CD14-positive monocyte (primary cell): ENCODE measurements at regions of chr10 and their contacts with region 1.

Region 1: DNA sequence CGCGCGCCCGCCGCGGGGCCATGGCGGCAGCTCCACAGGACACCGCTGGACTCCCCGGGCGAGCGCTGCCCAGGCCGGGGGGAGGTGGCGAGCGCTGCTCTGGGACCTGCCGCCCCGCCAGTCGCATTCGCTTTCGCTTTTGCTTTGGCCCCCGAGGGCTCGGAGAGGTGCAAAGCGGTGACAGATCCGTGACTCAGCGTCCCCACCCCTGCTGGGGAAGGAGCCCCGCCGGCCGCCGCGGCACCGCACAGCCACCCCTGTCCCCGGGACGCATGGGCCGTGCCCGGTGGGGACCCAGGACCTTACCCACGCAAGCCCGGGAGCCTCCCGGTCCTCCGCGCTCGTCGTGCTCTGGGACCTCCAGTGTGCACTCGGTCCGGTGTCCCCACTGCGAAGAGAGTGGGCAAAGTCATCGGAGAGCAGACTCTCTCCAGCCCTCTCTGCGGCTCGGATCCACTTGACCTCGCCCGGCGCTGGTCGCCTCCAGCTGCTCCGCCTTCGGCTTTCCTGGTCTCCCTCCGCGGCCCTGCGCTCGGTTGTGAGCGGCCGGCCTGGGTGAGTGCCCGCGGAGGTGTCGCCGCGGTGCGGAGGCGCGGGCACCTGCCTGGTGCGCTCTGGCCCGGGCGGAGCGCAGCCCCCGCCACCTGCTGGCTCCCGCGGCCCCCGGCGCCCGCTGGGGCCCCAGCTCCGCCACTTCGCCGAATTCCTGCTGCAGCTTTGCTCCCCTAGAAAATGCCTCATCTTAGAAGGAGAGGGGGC is at the start of gene IL15RA:
- DNase-seq: peak; percentile 78 to 90 (median 80)
- H3K4me3 ChIP-seq: peak within 1 kb of the TSS; percentile 71 to 97 (median 96)
- H3K4me3 Mint-ChIP-seq: peak within 1 kb of the TSS; percentile 98 to 99
- H3K27ac ChIP-seq: peak within 1 kb of the TSS; percentile 68 to 86
- H3K27ac Mint-ChIP-seq: peak within 1 kb of the TSS; percentile 89 to 95 (median 93)
- H3K4me1 ChIP-seq: peaks cover 13 to 25% of the 10 kb centered on the region in 2 donors
- H3K4me1 Mint-ChIP-seq: peaks cover 25% of the 10 kb centered on the region
- H3K27me3 ChIP-seq: peaks cover 0 to 3% of the 10 kb centered on the region in 2 donors
- H3K27me3 Mint-ChIP-seq: peaks cover 5 to 8% (median 7%) of the 10 kb centered on the region in 3 donors
- CTCF ChIP-seq: no peak
- polyA plus RNA-seq, gene IL15RA: 12.4 to 23.1 (median 12.6) TPM

Region 2: DNA sequence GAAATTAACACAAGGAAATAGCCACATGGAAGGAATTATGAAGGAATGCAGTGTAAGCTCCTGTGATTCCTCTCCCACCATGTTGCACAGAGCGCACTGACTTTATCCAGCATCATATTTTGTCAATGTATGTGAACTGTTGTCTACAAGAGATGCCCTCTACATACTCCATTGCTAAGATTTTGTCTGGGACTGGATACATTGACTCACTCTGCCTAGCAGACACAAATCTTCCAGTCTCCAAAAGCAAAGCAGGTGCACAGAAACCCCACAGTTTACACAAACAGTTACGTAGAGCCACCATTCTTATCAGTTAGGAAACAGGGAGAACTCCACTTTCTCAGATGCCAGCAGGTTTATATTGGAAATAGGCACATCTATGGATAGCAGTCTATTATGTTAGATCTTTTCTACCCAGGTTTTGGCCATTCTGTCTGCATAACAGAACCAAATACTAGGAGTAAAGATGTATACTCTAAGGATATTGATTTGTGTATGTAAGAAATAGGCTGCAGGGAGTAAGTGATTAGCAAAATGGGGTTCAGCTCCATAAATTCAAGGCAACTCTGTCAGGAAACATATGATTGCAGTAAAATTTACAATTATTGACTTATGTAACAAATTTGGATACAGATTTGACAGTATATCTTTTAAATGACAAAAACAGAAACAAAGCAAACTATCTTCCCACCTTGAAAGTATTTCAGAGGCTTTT is 975.5 kb before region 1 on chr10:
- intact Hi-C with region 1: no loop called
- DNase-seq: no peak
- H3K4me3 ChIP-seq: no peak overlapping the region
- H3K4me3 Mint-ChIP-seq: no peak overlapping the region
- H3K27ac ChIP-seq: no peak overlapping the region
- H3K27ac Mint-ChIP-seq: no peak overlapping the region
- H3K4me1 ChIP-seq: no peaks in the 10 kb centered on the region
- H3K4me1 Mint-ChIP-seq: no peaks in the 10 kb centered on the region
- H3K27me3 ChIP-seq: no peaks in the 10 kb centered on the region
- H3K27me3 Mint-ChIP-seq: peaks cover 0 to 2% (median 0%) of the 10 kb centered on the region in 3 donors
- CTCF ChIP-seq: no peak

Region 3: GRCh38 chr10:5684318-5684970 is 293.2 kb before region 1 on chr10 and contains the start of gene TASOR2:
- intact Hi-C with region 1: loop called in 1 of 2 experiments (anchors 10 kb)
- DNase-seq: peak; percentile 96 to 98 (median 96)
- H3K4me3 ChIP-seq: peak within 1 kb of the TSS; percentile 76 to 92 (median 81)
- H3K4me3 Mint-ChIP-seq: peak within 1 kb of the TSS; percentile 97 to 98
- H3K27ac ChIP-seq: peak within 1 kb of the TSS; percentile 80 to 93
- H3K27ac Mint-ChIP-seq: peak within 1 kb of the TSS; percentile 90 to 97 (median 95)
- H3K4me1 ChIP-seq: peaks cover 17 to 21% of the 10 kb centered on the region in 2 donors
- H3K4me1 Mint-ChIP-seq: peaks cover 31% of the 10 kb centered on the region
- H3K27me3 ChIP-seq: no peaks in the 10 kb centered on the region
- H3K27me3 Mint-ChIP-seq: peaks cover 0 to 3% (median 2%) of the 10 kb centered on the region in 3 donors
- CTCF ChIP-seq: no peak
- polyA plus RNA-seq, gene TASOR2: 3.2 to 12.3 (median 9.5) TPM

Region 4: DNA sequence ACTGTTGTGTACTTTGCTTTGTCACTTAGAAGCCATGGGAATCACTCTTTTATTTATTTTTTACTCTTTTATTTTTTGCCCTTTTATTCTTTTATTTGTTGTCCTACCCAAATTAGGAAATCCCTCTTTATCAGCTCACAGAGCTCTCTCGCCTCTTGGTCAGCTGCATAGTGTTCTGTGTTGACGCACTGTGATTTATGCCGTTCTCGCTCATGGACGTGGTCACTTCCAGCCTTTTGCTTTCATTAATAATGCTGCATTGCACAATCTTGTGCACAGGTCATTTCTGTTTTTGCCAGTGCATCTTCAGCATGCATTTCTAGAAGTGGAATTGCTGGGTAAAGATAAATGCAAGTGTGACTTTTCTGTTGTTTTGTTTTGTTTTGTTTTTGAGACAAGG is 45.3 kb before region 1 on chr10:
- intact Hi-C with region 1: no loop called
- DNase-seq: no peak
- H3K4me3 ChIP-seq: no peak overlapping the region
- H3K4me3 Mint-ChIP-seq: no peak overlapping the region
- H3K27ac ChIP-seq: peak overlapping the region in 1 of 2 donors; percentile 58
- H3K27ac Mint-ChIP-seq: peak overlapping the region in 4 of 7 donors; percentile 25 to 60 (median 36)
- H3K4me1 ChIP-seq: peaks cover 4 to 5% of the 10 kb centered on the region in 2 donors
- H3K4me1 Mint-ChIP-seq: peaks cover 13% of the 10 kb centered on the region
- H3K27me3 ChIP-seq: no peaks in the 10 kb centered on the region
- H3K27me3 Mint-ChIP-seq: peaks cover 0 to 1% (median 0%) of the 10 kb centered on the region in 3 donors
- CTCF ChIP-seq: no peak

Region 5: GRCh38 chr10:5987747-5988146 is 10.1 kb after region 1 on chr10:
- intact Hi-C with region 1: no loop called
- DNase-seq: peak in 1 of 3 donors; percentile 39
- H3K4me3 ChIP-seq: no peak overlapping the region
- H3K4me3 Mint-ChIP-seq: no peak overlapping the region
- H3K27ac ChIP-seq: no peak overlapping the region
- H3K27ac Mint-ChIP-seq: peak overlapping the region in 2 of 7 donors; percentile 56 to 57
- H3K4me1 ChIP-seq: no peaks in the 10 kb centered on the region
- H3K4me1 Mint-ChIP-seq: peaks cover 15% of the 10 kb centered on the region
- H3K27me3 ChIP-seq: no peaks in the 10 kb centered on the region
- H3K27me3 Mint-ChIP-seq: peaks cover 0 to 2% (median 2%) of the 10 kb centered on the region in 3 donors
- CTCF ChIP-seq: no peak

Region 6: DNA sequence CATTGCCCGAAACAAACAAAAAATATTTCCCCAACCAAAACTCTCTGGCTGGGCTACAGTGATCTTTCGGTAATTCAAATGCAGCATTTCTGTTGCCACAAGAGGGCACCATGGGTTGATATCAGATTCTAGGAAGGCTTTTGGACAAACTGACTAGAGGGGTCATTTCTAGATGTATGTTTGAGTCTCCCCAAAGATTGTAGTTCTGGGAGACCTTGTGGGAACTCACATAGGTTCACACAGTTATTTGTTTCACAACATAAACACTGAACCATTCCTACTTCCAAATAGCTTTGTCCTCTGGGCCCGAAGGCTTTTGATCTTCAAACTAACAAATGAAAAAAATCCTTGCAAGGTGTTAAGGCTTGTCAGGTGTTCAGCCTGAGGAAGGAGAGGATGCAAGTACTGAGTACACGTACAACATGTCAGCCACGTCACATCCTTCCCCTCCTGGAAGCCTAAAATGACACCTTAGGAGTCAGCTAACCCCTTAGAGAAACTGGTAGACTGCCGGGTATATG is 36.7 kb after region 1 on chr10:
- intact Hi-C with region 1: no loop called
- DNase-seq: peak; percentile 25 to 61 (median 48)
- H3K4me3 ChIP-seq: no peak overlapping the region
- H3K4me3 Mint-ChIP-seq: no peak overlapping the region
- H3K27ac ChIP-seq: no peak overlapping the region
- H3K27ac Mint-ChIP-seq: no peak overlapping the region
- H3K4me1 ChIP-seq: no peaks in the 10 kb centered on the region
- H3K4me1 Mint-ChIP-seq: peaks cover 4% of the 10 kb centered on the region
- H3K27me3 ChIP-seq: no peaks in the 10 kb centered on the region
- H3K27me3 Mint-ChIP-seq: peaks cover 0 to 2% (median 2%) of the 10 kb centered on the region in 3 donors
- CTCF ChIP-seq: peak; percentile 77